ENCODE measurements at regions of chr5 and their contacts with region 1.

Region 1: GRCh38 chr5:112310746-112311145 is 108.3 kb downstream of the EPB41L4A start:
- DNase-seq: no peak

Region 2: GRCh38 chr5:112059579-112060135 is 251.1 kb before region 1 on chr5:
- intact Hi-C with region 1: no loop called
- DNase-seq: no peak

Region 3: GRCh38 chr5:112239996-112240395 is 70.8 kb before region 1 on chr5:
- intact Hi-C with region 1: loop called in 1 of 2 experiments (anchors 2 kb)
- DNase-seq: no peak

Region 4: DNA sequence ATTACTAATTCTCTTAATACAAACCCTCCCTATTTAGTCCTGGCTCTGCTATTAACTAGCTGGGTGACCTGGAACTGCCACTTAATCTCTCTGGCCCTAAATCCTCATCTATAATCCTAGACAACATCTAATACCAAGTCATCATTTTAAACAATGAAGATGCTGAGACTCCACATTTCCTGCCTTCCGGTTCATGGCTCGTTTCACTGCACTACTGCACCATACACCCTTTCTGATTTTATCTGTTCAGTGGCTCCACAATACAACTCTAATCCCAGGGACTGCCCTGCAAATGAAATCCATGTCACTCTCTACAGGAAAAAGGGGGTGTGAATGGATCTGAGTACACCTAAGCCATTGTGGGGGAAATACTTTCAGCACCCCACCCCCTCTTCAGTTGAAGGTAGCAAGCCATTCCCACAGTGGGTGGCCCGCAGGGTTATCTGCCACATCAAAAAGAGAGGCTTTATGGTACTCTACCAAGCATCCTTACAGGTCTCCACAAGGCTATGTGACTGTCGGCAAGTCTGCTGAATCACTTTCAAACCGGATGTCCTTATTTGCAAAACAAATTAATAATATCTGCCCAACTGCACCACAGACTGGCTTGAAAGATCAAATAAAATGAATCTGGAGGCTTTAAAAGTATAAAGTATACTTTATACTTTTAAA is 18.8 kb after region 1 on chr5:
- intact Hi-C with region 1: no loop called
- DNase-seq: no peak

Region 5: GRCh38 chr5:112691758-112692157 is 381.0 kb after region 1 on chr5:
- intact Hi-C with region 1: no loop called
- DNase-seq: no peak

Measured in posterior vena cava (tissue), 2 donors.